ENCODE measurements at regions of chr2 and their contacts with region 1.

Region 1: GRCh38 chr2:15939854-15940660 is at the start of gene MYCN:
- DNase-seq: peak; percentile 92 to 95
- H3K4me3 ChIP-seq: peak within 1 kb of the TSS; percentile 75
- H3K4me3 Mint-ChIP-seq: peak within 1 kb of the TSS; percentile 85
- H3K27ac Mint-ChIP-seq: peak within 1 kb of the TSS; percentile 69
- H3K4me1 ChIP-seq: peaks cover 19% of the 10 kb centered on the region
- H3K4me1 Mint-ChIP-seq: peaks cover 17% of the 10 kb centered on the region
- H3K27me3 ChIP-seq: no peaks in the 10 kb centered on the region
- H3K27me3 Mint-ChIP-seq: no peaks in the 10 kb centered on the region
- CTCF ChIP-seq: peak in 1 of 2 experiments; percentile 80
- total RNA-seq, gene MYCN: 46.6 and 54.4 TPM in 2 replicates

Region 2: GRCh38 chr2:15636972-15637785 is 302.9 kb before region 1 on chr2:
- CTCF ChIA-PET with region 1: interaction called, 5 read pairs
- POLR2A ChIA-PET with region 1: no interaction called
- intact Hi-C with region 1: loop called (anchors 1 kb)
- DNase-seq: peak; percentile 72 to 80
- H3K4me3 ChIP-seq: no peak overlapping the region
- H3K4me3 Mint-ChIP-seq: no peak overlapping the region
- H3K27ac Mint-ChIP-seq: no peak overlapping the region
- H3K4me1 ChIP-seq: peaks cover 55% of the 10 kb centered on the region
- H3K4me1 Mint-ChIP-seq: peaks cover 32% of the 10 kb centered on the region
- H3K27me3 ChIP-seq: no peaks in the 10 kb centered on the region
- H3K27me3 Mint-ChIP-seq: no peaks in the 10 kb centered on the region
- CTCF ChIP-seq: peak; percentile 85 to 98

Region 3: GRCh38 chr2:15882761-15883497 is 57.1 kb before region 1 on chr2:
- CTCF ChIA-PET with region 1: no interaction called
- POLR2A ChIA-PET with region 1: no interaction called
- intact Hi-C with region 1: no loop called
- DNase-seq: no peak
- H3K4me3 ChIP-seq: no peak overlapping the region
- H3K4me3 Mint-ChIP-seq: no peak overlapping the region
- H3K27ac Mint-ChIP-seq: no peak overlapping the region
- H3K4me1 ChIP-seq: no peaks in the 10 kb centered on the region
- H3K4me1 Mint-ChIP-seq: peaks cover 3% of the 10 kb centered on the region
- H3K27me3 ChIP-seq: no peaks in the 10 kb centered on the region
- H3K27me3 Mint-ChIP-seq: no peaks in the 10 kb centered on the region
- CTCF ChIP-seq: no peak

Region 4: GRCh38 chr2:15984368-15985255 is 44.6 kb after region 1 on chr2:
- CTCF ChIA-PET with region 1: no interaction called
- POLR2A ChIA-PET with region 1: no interaction called
- intact Hi-C with region 1: loop called (anchors 5 kb)
- DNase-seq: no peak
- H3K4me3 ChIP-seq: no peak overlapping the region
- H3K4me3 Mint-ChIP-seq: no peak overlapping the region
- H3K27ac Mint-ChIP-seq: no peak overlapping the region
- H3K4me1 ChIP-seq: peaks cover 13% of the 10 kb centered on the region
- H3K4me1 Mint-ChIP-seq: peaks cover 7% of the 10 kb centered on the region
- H3K27me3 ChIP-seq: no peaks in the 10 kb centered on the region
- H3K27me3 Mint-ChIP-seq: no peaks in the 10 kb centered on the region
- CTCF ChIP-seq: no peak

Region 5: GRCh38 chr2:16093639-16094529 is 153.8 kb after region 1 on chr2:
- CTCF ChIA-PET with region 1: interaction called, 5 read pairs
- POLR2A ChIA-PET with region 1: no interaction called
- intact Hi-C with region 1: loop called (anchors 2 kb)
- DNase-seq: peak; percentile 25 to 73
- H3K4me3 ChIP-seq: no peak overlapping the region
- H3K4me3 Mint-ChIP-seq: no peak overlapping the region
- H3K27ac Mint-ChIP-seq: peak overlapping the region; percentile 37
- H3K4me1 ChIP-seq: peaks cover 39% of the 10 kb centered on the region
- H3K4me1 Mint-ChIP-seq: peaks cover 16% of the 10 kb centered on the region
- H3K27me3 ChIP-seq: no peaks in the 10 kb centered on the region
- H3K27me3 Mint-ChIP-seq: no peaks in the 10 kb centered on the region
- CTCF ChIP-seq: no peak

Region 6: DNA sequence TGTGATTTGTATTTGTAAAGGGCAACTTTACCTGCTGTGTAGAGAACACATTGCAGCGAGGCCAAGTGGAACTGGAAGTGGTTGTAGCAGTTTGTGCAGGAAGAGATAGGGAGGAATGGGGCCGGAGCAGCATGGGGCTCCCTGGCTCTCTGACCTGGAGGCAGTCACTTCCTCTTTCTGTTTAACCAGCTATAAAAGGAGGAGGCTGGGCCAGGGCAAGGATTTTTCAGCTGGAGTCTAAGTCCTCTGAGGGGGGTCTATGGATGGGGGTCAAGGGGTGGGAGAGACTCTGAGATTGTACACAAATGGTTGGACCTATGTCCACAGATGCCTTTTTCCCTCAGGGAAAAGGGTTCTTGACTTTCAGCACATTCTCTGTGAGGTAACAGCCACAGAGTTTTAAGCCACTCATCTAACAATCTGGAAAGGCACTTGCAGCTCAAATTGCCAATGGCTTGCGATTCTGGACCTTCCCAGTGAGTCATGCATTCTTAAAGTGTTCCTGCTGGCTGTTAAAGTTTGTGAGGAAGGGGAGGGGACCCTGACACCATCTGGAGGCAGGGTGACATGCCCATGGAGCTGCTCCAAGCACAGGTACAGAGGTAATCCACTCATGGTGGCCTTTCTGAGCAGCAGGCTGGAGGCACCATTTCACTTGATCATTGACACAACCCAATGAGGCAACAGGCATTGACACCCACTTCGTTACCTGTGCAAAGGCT is 378.6 kb after region 1 on chr2:
- CTCF ChIA-PET with region 1: interaction called, 7 read pairs
- POLR2A ChIA-PET with region 1: no interaction called
- intact Hi-C with region 1: loop called (anchors 1 kb)
- DNase-seq: peak; percentile 71 to 85
- H3K4me3 ChIP-seq: no peak overlapping the region
- H3K4me3 Mint-ChIP-seq: peak overlapping the region; percentile 43
- H3K27ac Mint-ChIP-seq: peak overlapping the region; percentile 96
- H3K4me1 ChIP-seq: peaks cover 57% of the 10 kb centered on the region
- H3K4me1 Mint-ChIP-seq: peaks cover 44% of the 10 kb centered on the region
- H3K27me3 ChIP-seq: no peaks in the 10 kb centered on the region
- H3K27me3 Mint-ChIP-seq: no peaks in the 10 kb centered on the region
- CTCF ChIP-seq: no peak

Region 7: DNA sequence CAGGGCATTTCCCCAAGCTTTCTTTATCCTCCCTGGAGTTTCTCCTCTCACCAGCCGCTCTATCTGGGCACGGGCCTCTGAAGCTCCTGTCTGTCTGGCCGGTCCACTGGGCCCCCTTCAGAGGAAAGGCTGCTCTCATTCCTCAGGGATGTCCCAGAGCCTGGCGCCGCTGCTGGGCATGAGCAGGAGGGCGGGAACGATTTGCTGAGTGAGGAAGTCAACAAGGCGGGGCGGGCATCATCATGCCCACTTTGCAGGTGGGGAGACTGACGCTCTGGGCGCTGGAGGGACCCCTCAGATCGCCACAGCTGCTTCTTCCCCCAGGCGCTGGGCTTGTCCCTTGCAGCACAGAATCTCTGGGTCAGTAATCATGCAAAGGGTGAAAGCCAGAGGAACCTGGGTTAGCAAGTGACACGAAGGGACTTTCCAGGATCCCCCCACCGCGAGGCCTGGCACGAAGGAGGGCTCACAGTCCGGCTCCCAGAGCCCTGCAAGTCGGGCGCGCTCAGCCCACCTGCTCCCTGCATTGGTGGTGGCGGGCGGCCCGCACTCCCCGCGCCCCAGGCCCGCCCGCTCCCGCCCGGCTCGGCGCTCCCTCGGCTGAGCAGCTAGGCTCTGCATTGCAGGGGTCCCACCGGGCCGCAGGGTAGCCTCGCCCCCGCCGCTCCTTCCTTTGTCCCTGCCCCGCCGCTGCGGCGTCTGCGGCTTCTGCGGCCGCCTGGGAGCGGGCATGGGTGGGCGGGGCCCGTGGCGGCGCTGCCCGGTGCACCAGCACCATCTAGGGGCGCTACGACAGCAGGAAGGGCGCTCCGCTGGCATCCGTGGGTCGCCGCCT is 567.8 kb after region 1 on chr2:
- CTCF ChIA-PET with region 1: interaction called, 5 read pairs
- POLR2A ChIA-PET with region 1: no interaction called
- intact Hi-C with region 1: loop called (anchors 1 kb)
- DNase-seq: peak; percentile 66 to 82
- H3K4me3 ChIP-seq: peak overlapping the region; percentile 26
- H3K4me3 Mint-ChIP-seq: peak overlapping the region; percentile 61
- H3K27ac Mint-ChIP-seq: peak overlapping the region; percentile 37
- H3K4me1 ChIP-seq: peaks cover 36% of the 10 kb centered on the region
- H3K4me1 Mint-ChIP-seq: peaks cover 12% of the 10 kb centered on the region
- H3K27me3 ChIP-seq: no peaks in the 10 kb centered on the region
- H3K27me3 Mint-ChIP-seq: no peaks in the 10 kb centered on the region
- CTCF ChIP-seq: peak; percentile 83 to 91

Measured in Caco-2 (cell line).